ENCODE measurements at regions of chrX and their contacts with region 1.

Region 1: DNA sequence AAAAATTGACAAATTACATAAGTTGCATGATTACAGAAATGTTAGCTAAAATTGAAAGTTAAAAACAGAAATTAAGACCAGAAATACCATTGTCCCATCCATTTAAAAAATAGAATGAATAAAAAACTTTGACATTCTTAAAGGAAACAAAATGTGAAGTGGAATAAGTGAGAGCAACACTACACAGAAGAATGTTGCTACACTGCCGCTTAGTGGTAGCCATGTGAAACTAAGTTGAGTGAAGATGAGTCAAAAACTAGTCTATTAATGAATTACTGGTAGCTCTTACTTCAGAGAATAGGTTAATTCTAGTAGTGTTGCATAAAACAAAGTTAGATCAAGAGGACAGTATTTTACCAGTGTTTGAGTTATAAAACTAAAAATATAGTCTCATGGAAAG is 571.0 kb upstream of the KLHL4 start:
- DNase-seq: no peak
- ATAC-seq: no peak
- H3K4me3 Mint-ChIP-seq: no peak overlapping the region
- H3K27ac Mint-ChIP-seq: no peak overlapping the region
- H3K4me1 Mint-ChIP-seq: no peaks in the 10 kb centered on the region
- H3K27me3 Mint-ChIP-seq: no peaks in the 10 kb centered on the region
- CTCF ChIP-seq: no peak

Region 2: DNA sequence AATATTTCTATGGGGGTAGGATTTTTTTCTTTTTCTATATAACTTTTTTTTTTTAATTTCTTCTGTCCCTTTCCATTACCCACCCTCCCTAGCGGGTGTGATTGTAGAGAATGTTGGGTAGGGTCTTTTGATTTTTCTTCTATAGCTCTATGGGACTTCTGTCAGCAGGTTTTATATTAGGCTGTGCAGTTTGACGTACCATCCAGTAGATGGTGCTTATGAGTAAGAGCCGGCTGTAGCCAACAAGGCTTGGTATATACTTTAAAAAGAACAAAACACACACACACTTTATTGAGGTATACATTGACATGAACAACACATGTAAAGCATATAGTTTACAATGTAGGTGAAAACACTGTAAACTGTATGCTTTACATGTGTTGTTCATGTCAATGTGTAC is 1319.2 kb before region 1 on chrX:
- CTCF ChIA-PET with region 1: no interaction called
- POLR2A ChIA-PET with region 1: no interaction called
- intact Hi-C with region 1: loop called (anchors 5 kb)
- DNase-seq: no peak
- ATAC-seq: no peak
- H3K4me3 Mint-ChIP-seq: no peak overlapping the region
- H3K27ac Mint-ChIP-seq: no peak overlapping the region
- H3K4me1 Mint-ChIP-seq: no peaks in the 10 kb centered on the region
- H3K27me3 Mint-ChIP-seq: no peaks in the 10 kb centered on the region
- CTCF ChIP-seq: no peak

Region 3: DNA sequence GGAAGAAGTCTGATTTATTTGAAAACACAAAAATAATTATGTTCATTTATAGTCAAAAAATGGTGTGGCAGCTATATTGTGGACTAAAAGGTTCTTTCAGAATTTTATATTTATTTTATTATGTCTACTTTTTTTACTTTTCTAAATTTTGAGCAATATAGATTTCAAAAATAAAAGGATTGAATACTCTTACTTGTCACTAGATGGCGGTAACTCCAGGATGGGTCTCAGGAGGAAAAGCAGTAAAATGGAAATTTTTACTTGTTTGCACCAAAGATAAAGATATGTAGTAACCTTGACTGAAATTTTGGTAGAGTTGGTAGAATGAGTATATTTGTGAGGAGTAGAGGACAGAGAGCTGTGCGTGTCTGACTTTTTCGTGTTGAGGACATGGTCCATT is 812.8 kb before region 1 on chrX:
- CTCF ChIA-PET with region 1: no interaction called
- POLR2A ChIA-PET with region 1: no interaction called
- intact Hi-C with region 1: loop called (anchors 10 kb)
- DNase-seq: no peak
- ATAC-seq: no peak
- H3K4me3 Mint-ChIP-seq: no peak overlapping the region
- H3K27ac Mint-ChIP-seq: no peak overlapping the region
- H3K4me1 Mint-ChIP-seq: peaks cover 1% of the 10 kb centered on the region
- H3K27me3 Mint-ChIP-seq: peaks cover 3% of the 10 kb centered on the region
- CTCF ChIP-seq: no peak

Measured in activated B cell treated with CpG ODN at 0.5 μM for 24 hours (primary cell).